ENCODE measurements at regions of chr6 and their contacts with region 1.

Region 1: DNA sequence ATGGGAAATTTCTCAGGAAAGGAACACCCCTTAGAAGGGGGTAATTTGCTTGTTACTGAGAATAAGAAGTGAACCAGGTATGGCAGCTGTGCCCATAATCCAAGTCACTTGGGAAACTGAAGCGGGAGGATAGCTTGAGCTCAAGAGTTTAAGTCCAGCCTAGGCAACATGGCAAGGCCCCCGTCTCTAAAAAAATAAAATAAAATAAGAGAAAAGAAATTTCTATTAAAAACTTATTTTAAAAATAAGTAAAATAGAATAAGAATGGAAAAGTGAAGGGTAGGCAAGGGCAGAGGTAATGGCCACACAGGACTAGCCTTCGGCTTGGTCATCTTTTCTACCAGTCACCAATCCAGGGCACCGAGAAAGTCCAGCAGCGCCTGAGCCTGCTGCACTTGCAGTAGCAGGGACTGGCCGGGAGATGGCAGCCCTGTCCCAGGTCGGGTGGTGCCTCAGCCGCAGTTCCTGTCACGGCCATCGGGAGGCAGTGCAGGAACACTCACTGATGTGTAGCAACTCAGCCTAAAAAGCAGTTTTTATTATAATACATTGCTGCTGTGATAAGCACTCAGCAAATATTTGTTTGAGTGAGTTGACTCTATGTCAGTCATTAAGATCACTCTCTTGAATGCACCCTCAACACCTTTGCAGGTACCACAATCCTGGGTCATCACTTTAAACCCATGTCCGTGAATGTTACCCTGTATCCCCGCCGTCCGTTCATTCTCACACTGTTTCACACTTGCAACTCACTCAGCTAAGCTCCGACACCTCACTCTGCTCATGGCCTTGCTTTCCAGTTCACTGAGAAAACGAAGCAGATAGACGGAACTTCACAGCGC is 23.2 kb upstream of the GCM1 start:
- DNase-seq: peak; percentile 97

Region 2: DNA sequence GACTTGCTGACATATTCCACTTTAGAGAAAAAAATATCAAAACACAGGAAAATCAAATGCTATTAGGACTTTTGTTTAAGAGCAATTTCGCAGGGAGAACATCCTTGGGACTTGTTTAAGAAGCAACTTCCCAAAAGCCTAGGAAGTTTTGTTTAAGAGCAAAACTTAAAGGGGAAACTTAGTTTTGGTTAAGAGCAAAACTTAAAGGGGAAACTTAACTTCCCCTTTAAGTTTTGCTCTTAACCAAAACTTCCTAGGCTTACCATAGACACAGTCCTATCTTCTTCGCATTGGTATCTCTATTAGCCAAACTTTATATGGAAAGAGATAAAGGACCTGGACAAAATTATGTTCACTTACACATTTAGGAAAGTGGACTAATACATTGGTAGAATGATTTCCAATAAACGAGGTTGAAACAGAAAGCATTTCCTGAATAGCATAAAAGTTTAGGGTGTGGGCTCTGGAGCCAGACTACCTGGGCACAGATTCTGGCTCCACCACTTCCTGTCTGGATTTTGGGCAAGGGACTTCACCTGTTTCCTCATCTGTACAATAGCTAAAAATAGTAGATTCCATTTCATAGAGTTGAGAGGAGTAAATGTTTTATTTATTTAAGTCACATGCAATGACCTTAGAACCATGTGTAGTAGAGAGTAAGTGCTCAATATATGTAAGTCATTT is 794.1 kb before region 1 on chr6:
- intact Hi-C with region 1: no loop called
- DNase-seq: no peak

Region 3: DNA sequence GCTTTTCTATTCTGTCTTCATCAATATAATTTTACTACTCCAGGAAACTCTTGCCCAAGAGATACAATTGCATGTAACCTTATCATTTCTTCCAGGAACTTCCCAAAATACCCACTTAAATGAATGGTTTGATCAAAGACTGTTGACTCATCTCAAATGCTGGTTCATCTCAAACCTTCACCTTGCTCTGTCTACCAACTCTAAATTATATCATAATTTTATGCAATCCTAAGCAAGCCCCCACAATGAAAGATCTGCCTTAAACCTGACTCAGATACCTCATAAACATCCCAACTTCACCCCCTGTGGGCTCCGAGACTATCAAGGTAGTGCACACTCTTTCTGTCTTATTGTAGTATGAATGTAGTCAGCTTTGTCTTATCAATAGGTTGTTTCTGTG is 42.3 kb after region 1 on chr6:
- intact Hi-C with region 1: no loop called
- DNase-seq: no peak

Region 4: GRCh38 chr6:53484476-53485280 is 312.9 kb after region 1 on chr6:
- intact Hi-C with region 1: loop called (anchors 5 kb)
- DNase-seq: no peak